ENCODE measurements at regions of chr1 and their contacts with region 1.

Region 1: GRCh38 chr1:7380712-7381111 is 390.4 kb upstream of the VAMP3 start:
- DNase-seq: no peak
- ATAC-seq: no peak
- H3K4me3 ChIP-seq: no peak overlapping the region
- H3K27ac ChIP-seq: no peak overlapping the region
- H3K4me1 ChIP-seq: peaks cover 0 to 26% (median 7%) of the 10 kb centered on the region in 9 donors
- H3K27me3 ChIP-seq: no peaks in the 10 kb centered on the region
- CTCF ChIP-seq: no peak

Region 2: DNA sequence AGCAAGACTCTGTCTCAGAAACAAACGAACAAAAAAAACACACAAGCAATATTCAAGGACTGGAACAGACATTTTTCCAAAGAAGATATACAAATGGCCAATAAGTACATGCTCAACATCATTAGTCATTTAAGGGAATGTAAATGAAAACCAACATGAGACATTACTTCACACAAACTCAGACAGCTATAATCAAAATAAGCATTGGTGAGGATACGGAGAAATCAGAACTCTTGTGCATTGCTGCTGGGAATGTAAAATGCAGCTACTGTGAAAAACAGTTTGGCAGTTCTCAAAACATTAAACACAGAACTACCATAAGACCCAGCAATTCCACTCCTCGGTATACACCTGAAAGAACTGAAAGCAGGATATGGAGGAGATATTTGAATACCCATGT is 841.8 kb before region 1 on chr1:
- intact Hi-C with region 1: loop called in 1 of 10 experiments (anchors 5 kb)
- DNase-seq: no peak
- ATAC-seq: no peak
- H3K4me3 ChIP-seq: no peak overlapping the region
- H3K27ac ChIP-seq: no peak overlapping the region
- H3K4me1 ChIP-seq: peaks cover 0 to 9% (median 3%) of the 10 kb centered on the region in 9 donors
- H3K27me3 ChIP-seq: no peaks in the 10 kb centered on the region
- CTCF ChIP-seq: no peak

Region 3: GRCh38 chr1:7013833-7014639 is 366.7 kb before region 1 on chr1:
- intact Hi-C with region 1: no loop called
- DNase-seq: peak; percentile 48 to 62
- ATAC-seq: peak; percentile 86 to 99 (median 95)
- H3K4me3 ChIP-seq: no peak overlapping the region
- H3K27ac ChIP-seq: peak overlapping the region in 9 of 10 donors; percentile 29 to 82 (median 76)
- H3K4me1 ChIP-seq: peaks cover 0 to 42% (median 14%) of the 10 kb centered on the region in 9 donors
- H3K27me3 ChIP-seq: no peaks in the 10 kb centered on the region
- CTCF ChIP-seq: no peak

Measured in heart right ventricle (tissue), 16 donors.